Psoas muscle (tissue), 8 donors: ENCODE measurements at regions of chr9 and their contacts with region 1.

Region 1: DNA sequence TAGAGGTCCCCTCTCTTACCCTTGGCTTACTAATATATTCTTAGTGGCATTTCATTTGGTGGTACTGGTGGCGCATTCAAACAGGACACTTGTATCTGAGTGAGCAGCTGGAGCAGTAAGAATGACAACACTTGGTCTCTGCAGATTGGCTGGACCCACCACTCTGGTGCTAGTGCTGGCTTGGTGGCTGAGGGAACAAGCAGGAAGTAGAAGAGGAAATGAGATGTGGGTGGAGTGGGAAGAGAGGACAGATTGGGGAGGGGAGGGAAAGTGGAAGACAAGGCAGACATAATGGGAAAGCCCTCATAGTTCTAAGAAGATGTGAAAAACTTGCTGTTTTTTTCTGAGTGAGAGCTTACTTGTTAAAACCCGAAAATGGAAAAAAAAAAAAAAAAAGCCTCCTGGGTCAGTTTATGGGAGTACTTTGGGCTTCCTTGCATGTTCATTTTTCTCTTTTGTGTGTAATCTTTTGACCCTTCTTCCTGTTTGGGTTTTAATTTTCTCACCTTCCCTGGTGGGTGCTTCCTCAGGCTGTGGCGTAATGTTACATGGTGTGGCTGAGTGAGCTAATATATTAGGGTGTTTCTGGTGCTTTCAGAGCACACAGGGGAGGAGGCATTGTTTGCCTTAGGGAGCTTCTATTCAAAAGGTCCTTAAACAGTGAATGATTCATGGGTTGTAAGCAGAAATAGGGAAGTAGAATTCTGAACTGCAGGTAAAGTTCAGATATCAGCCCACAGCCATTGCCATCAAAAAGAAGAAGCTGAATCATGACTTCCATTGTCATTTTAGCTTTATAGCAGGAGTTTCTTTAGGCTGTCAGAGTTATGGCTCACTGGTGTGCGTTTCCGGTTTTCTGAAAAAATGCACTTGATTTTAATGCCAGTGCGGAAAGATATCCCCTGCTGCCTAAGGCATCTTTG is 52.3 kb downstream of the TLE4 start:
- DNase-seq: peak; percentile 17 to 48
- ATAC-seq: peak in 3 of 4 donors; percentile 54 to 67 (median 63)
- H3K4me3 ChIP-seq: no peak overlapping the region
- H3K27ac ChIP-seq: no peak overlapping the region
- H3K4me1 ChIP-seq: peaks cover 6% of the 10 kb centered on the region
- H3K27me3 ChIP-seq: no peaks in the 10 kb centered on the region
- CTCF ChIP-seq: no peak

Region 2: GRCh38 chr9:79588488-79589223 is 35.4 kb before region 1 on chr9:
- intact Hi-C with region 1: loop called in 1 of 2 experiments (anchors 5 kb)
- DNase-seq: no peak
- ATAC-seq: peak in 1 of 4 donors; percentile 32
- H3K4me3 ChIP-seq: no peak overlapping the region
- H3K27ac ChIP-seq: no peak overlapping the region
- H3K4me1 ChIP-seq: peaks cover 44% of the 10 kb centered on the region
- H3K27me3 ChIP-seq: no peaks in the 10 kb centered on the region
- CTCF ChIP-seq: no peak